ENCODE measurements at regions of chr11 and their contacts with region 1.

Region 1: DNA sequence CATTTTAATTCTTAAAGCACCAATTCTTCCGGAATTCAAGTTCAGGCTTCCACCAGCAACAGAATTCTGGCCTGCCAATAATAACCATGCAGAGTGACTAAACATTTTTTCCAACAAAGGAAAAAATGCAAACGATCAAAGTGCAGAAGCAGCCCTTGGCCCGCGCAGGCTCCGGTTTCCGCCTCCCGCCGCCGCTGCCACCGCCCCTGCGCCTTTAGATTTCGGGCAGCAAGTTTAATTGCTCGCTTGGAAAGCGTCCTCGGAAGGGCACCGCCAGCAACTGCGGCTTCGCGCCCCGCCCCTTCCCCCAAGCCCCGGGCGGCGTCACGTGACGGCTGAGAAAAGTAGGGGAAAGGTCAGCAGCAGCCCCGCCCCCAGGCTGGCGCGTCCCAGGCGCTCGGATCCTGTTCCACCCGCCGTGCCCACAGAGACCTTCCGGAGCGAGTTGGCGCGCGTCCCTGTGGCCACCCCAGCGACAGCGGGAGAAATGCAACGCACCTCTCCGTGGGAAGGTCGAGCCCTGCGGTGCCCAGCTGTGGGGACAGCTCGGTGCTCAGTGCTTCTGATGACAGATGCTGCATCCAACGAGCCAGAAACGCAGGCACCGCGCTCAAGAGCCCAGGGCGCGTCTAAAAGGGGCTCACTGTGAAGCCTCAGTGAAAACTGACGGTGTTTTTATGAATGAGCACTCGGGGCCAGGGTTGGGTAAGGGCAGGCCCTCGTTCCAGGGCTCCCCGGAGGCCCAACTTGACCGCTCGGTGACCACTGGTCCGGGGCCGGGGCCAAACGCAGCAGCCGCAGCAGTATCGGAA is 2.5 kb downstream of the CPT1A start:
- DNase-seq: peak; percentile 98
- H3K4me3 ChIP-seq: peak overlapping the region; percentile 47 to 71 (median 69)
- H3K27ac ChIP-seq: peak overlapping the region; percentile 82
- H3K4me1 ChIP-seq: peaks cover 42% of the 10 kb centered on the region
- H3K27me3 ChIP-seq: peaks cover 0 to 13% of the 10 kb centered on the region in 2 experiments
- CTCF ChIP-seq: no peak
- POLR2A ChIP-seq: peak; percentile 21

Region 2: GRCh38 chr11:68525930-68526329 is 313.3 kb before region 1 on chr11:
- CTCF ChIA-PET with region 1: no interaction called
- POLR2A ChIA-PET with region 1: no interaction called
- dilution Hi-C with region 1: no loop called
- intact Hi-C with region 1: no loop called
- DNase-seq: peak; percentile 76
- H3K4me3 ChIP-seq: no peak overlapping the region
- H3K27ac ChIP-seq: peak overlapping the region; percentile 35
- H3K4me1 ChIP-seq: peaks cover 50% of the 10 kb centered on the region
- H3K27me3 ChIP-seq: no peaks in the 10 kb centered on the region
- CTCF ChIP-seq: no peak
- POLR2A ChIP-seq: no peak

Region 3: GRCh38 chr11:68643585-68643984 is 195.7 kb before region 1 on chr11:
- CTCF ChIA-PET with region 1: no interaction called
- POLR2A ChIA-PET with region 1: no interaction called
- dilution Hi-C with region 1: no loop called
- intact Hi-C with region 1: no loop called
- DNase-seq: no peak
- H3K4me3 ChIP-seq: no peak overlapping the region
- H3K27ac ChIP-seq: no peak overlapping the region
- H3K4me1 ChIP-seq: no peaks in the 10 kb centered on the region
- H3K27me3 ChIP-seq: peaks cover 4 to 8% of the 10 kb centered on the region in 2 experiments
- CTCF ChIP-seq: no peak
- POLR2A ChIP-seq: no peak

Region 4: DNA sequence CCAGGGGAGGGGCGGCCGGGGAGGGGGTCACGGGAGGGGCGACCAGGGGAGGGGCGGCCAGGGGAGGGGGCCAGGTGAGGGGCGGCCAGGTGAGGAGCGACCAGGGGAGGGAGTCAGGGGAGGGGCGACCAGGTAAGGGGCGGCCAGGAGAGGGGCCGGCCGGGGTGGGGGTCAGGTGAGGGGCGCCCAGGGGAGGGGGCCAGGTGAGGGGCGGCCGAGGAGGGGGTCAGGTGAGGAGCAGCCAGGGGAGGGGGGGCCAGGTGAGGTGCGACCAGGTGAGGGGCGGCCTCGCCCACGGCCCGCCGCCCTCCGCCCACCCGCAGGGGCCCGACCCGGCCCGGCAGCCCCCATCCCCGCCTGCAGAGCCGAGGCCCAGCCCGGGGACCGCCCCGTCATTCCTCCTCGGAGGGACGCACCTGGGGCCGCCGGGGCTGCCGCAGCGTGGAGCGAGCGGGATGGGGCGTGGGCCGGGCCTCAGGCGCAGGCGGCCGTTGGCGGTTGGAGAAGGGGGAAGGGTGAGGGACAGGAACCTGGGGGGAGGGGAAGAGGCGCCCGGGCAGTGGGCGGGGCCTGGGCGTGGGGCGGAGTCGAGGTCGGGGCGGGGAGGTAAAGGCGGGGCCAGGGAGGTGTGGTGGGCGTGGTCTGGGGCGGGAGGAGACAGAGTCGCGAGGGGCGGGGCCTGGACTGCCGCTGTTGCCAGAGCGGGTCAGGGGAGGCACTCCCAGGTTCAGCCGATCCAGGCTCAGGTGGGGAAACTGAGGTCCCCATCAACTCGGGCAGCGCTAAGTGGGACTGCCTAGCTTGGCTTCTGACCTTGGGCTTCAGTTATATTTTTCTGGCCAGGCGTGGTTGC is 88.0 kb before region 1 on chr11 and contains the start of gene TESMIN:
- CTCF ChIA-PET with region 1: no interaction called
- POLR2A ChIA-PET with region 1: no interaction called
- dilution Hi-C with region 1: no loop called
- intact Hi-C with region 1: loop called (anchors 2 kb)
- DNase-seq: peak; percentile 58
- H3K4me3 ChIP-seq: peak within 1 kb of the TSS in 2 of 3 experiments; percentile 22 to 46
- H3K27ac ChIP-seq: no peak within 1 kb of the TSS
- H3K4me1 ChIP-seq: peaks cover 21% of the 10 kb centered on the region
- H3K27me3 ChIP-seq: no peaks in the 10 kb centered on the region
- CTCF ChIP-seq: no peak
- POLR2A ChIP-seq: no peak
- total RNA-seq, gene TESMIN: 3.1 and 6.1 TPM in 2 replicates

Region 5: DNA sequence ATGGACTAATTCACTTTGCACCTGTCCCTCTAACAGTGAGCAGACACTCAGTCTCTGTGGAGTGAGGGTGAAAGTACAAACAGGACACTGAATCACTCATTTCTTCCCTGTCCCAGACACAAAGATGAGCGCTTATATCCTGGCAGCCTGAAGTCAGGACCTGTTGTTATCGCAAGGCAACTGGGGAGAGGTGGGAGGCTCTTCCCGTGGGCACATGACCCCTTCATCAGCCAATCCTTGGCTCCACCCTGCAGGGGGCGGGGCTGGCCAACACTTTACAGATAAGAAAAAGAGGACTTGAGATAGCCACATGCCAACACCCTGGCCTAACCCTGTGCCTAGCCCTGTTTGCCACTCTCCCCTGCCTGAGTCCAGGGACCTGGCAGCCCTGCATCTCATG is 58.4 kb before region 1 on chr11:
- CTCF ChIA-PET with region 1: no interaction called
- POLR2A ChIA-PET with region 1: no interaction called
- dilution Hi-C with region 1: no loop called
- intact Hi-C with region 1: no loop called
- DNase-seq: peak; percentile 50
- H3K4me3 ChIP-seq: no peak overlapping the region
- H3K27ac ChIP-seq: no peak overlapping the region
- H3K4me1 ChIP-seq: no peaks in the 10 kb centered on the region
- H3K27me3 ChIP-seq: no peaks in the 10 kb centered on the region
- CTCF ChIP-seq: no peak
- POLR2A ChIP-seq: no peak

Region 6: DNA sequence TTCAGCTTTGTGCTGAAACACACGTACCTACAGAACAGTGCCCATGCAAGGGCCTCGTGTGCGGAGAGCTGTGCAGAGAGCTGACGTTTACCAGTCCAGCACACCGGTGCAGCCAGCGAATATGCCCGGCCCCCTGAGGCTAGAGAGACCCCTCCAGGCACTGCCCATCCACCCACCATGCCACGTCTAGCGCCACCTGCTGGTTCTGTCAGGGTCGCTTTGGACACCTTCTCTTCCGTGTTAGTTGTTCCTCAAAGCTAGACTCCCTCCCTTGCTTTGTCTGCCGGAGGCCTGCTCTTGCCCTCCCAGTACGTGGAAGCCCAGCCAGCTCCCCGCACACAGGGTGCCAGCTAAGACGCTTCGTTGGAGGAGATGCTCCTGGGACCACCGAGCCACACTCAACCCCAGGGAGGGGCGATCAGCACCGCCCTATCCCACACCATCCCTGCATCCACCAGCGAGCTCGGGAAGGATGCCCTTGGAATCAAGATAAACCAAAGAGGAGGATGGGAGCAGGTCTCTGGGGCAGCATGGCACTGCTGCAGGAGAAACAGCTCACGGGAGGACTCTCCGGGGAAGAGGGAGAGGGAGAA is 40.9 kb before region 1 on chr11:
- CTCF ChIA-PET with region 1: interaction called, 12 read pairs
- POLR2A ChIA-PET with region 1: no interaction called
- dilution Hi-C with region 1: no loop called
- intact Hi-C with region 1: no loop called
- DNase-seq: peak; percentile 10
- H3K4me3 ChIP-seq: no peak overlapping the region
- H3K27ac ChIP-seq: no peak overlapping the region
- H3K4me1 ChIP-seq: no peaks in the 10 kb centered on the region
- H3K27me3 ChIP-seq: no peaks in the 10 kb centered on the region
- CTCF ChIP-seq: peak; percentile 72
- POLR2A ChIP-seq: no peak

Region 7: GRCh38 chr11:68855205-68855981 is 16.1 kb after region 1 on chr11:
- CTCF ChIA-PET with region 1: interaction called, 5 read pairs
- POLR2A ChIA-PET with region 1: no interaction called
- dilution Hi-C with region 1: no loop called
- intact Hi-C with region 1: loop called (anchors 1 kb)
- DNase-seq: peak; percentile 88
- H3K4me3 ChIP-seq: peak overlapping the region; percentile 37 to 63 (median 49)
- H3K27ac ChIP-seq: peak overlapping the region; percentile 17
- H3K4me1 ChIP-seq: peaks cover 12% of the 10 kb centered on the region
- H3K27me3 ChIP-seq: peaks cover 12 to 14% of the 10 kb centered on the region in 2 experiments
- CTCF ChIP-seq: no peak
- POLR2A ChIP-seq: no peak

Region 8: DNA sequence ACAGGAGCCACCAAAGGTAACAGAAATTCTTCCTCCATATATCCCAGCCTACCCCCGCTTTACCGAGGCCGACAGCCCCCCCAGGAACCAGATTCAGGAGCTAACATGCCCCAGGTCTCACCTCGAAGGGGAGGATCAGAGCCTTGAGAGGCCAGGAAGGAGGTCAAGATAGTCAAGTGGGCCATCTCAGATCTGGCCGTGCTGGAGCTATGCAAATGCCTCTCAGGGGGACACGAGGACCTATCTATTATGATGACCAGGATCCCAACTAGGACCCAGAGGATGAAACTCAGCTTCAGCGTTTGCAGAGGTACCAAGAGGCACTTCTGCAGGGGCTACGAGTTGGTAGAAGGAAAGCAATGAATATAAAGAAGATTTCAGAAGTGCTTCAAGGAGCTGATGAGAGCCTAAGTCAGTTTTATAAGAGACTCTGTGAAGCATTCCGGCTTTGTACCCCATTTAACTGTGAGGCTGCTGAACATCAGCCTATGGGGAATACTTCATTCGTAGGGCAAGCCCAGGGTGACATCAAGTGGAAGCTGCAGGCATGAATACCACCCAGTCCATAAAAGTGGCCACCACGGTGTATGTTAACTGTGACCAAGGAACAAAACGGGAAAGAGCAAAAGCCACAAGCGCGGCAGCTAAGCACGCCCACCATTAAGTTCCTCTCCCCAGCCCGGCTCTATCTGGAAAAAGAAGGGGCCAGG is 30.1 kb after region 1 on chr11:
- CTCF ChIA-PET with region 1: interaction called, 3 read pairs
- POLR2A ChIA-PET with region 1: no interaction called
- dilution Hi-C with region 1: no loop called
- intact Hi-C with region 1: loop called (anchors 2 kb)
- DNase-seq: peak; percentile 65
- H3K4me3 ChIP-seq: peak overlapping the region; percentile 15 to 80 (median 69)
- H3K27ac ChIP-seq: no peak overlapping the region
- H3K4me1 ChIP-seq: peaks cover 11% of the 10 kb centered on the region
- H3K27me3 ChIP-seq: peaks cover 0 to 2% of the 10 kb centered on the region in 2 experiments
- CTCF ChIP-seq: peak in 1 of 2 donors; percentile 16
- POLR2A ChIP-seq: no peak

Region 9: GRCh38 chr11:68903288-68904247 is 64.3 kb after region 1 on chr11 and contains the starts of genes IGHMBP2 and MRPL21:
- CTCF ChIA-PET with region 1: no interaction called
- POLR2A ChIA-PET with region 1: no interaction called
- dilution Hi-C with region 1: no loop called
- intact Hi-C with region 1: loop called (anchors 1 kb)
- DNase-seq: peak; percentile 81
- H3K4me3 ChIP-seq: peak within 1 kb of the TSS; percentile 47 to 94 (median 81)
- H3K27ac ChIP-seq: peak within 1 kb of the TSS; percentile 40
- H3K4me1 ChIP-seq: peaks cover 14% of the 10 kb centered on the region
- H3K27me3 ChIP-seq: no peaks in the 10 kb centered on the region
- CTCF ChIP-seq: no peak
- POLR2A ChIP-seq: peak; percentile 94
- total RNA-seq, gene IGHMBP2: 23.5 and 25.1 TPM in 2 replicates
- total RNA-seq, gene MRPL21: 52.2 and 65.1 TPM in 2 replicates

Measured in endothelial cell of umbilical vein (primary cell).